GM23248 (cell line): ENCODE measurements at regions of chrX and their contacts with region 1.

Region 1: DNA sequence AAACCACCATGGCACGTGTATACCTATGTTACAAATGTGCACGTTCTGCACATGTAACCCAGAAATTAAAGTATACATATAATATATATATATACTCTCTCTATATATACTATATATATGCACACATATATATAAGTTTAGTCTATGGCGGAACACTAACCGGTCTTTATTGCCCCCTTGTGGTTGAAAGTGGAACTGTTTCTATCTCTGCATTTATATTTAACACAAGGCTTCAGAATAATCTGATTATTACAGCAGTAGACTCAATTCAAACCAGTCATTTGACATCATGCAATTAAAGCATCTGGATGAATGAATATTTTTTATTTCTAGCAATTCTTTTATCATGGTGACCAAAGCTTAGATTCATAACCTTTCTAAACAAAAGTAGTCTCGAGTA is 14.6 kb downstream of the RAB9B start:
- DNase-seq: peak; percentile 24
- H3K4me3 ChIP-seq: no peak overlapping the region
- H3K27ac ChIP-seq: no peak overlapping the region
- H3K4me1 ChIP-seq: peaks cover 5% of the 10 kb centered on the region
- H3K27me3 ChIP-seq: no peaks in the 10 kb centered on the region

Region 2: DNA sequence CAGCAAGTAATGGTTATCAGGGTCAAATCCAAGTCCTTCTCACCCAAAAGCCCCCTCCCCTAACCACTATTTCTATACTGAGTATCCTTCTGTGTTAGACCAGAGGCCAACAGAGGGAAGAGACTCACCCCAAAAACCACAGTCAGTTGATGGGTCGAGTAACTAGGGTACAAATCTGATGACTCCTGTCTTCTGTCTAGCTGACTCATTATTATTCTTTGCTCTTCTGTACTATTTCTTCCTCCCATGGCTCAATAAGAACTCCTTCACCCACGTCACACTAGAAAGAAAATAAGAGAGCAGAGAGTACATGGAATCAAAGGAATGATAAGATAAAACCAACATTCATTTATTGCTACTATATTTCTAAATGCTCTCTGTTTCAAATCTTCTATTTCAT is 300.3 kb before region 1 on chrX:
- in situ Hi-C with region 1: no loop called
- DNase-seq: peak; percentile 58
- H3K4me3 ChIP-seq: no peak overlapping the region
- H3K27ac ChIP-seq: peak overlapping the region; percentile 27; the same call in 1 of the 2 replicates
- H3K4me1 ChIP-seq: peaks cover 10% of the 10 kb centered on the region; the same call in 1 of the 2 replicates
- H3K27me3 ChIP-seq: no peaks in the 10 kb centered on the region

Region 3: DNA sequence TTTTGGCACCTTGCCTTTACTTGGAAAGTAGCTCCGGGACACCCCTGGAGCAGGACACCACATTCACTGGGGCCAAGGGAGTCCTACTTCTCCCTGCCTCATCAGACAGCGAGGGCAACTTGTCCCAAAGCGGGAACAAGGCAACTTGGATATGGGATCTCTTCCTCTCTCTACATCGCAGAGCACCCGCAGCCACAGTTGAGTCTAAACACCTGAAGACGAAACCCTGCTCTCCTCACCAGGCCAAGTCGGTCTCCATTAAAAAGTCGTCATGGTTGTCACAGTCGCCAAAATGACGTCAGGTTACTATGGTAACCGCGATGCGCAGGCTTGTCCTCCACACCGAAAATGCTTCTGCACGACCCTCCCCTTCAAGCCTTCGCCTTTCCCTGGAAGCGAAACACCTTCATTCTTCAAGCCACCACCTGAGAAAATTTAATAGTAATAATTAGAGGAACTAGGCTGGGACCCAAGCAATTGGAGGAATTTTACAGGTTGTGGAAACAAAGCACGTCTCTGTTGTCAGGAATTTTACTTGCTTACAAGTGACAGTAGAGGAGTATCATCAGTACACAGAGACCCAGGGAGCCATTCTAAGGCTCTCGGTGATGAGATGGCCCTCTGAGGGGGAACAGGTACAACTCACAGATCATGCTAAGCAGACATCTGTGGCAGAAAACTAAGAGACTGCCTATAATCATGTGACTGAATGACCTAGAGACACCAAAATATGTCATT is 262.6 kb before region 1 on chrX:
- in situ Hi-C with region 1: loop called (anchors 25 kb)
- DNase-seq: no peak
- H3K4me3 ChIP-seq: no peak overlapping the region
- H3K27ac ChIP-seq: no peak overlapping the region
- H3K4me1 ChIP-seq: peaks cover 8% of the 10 kb centered on the region; the same call in 1 of the 2 replicates
- H3K27me3 ChIP-seq: no peaks in the 10 kb centered on the region

Region 4: DNA sequence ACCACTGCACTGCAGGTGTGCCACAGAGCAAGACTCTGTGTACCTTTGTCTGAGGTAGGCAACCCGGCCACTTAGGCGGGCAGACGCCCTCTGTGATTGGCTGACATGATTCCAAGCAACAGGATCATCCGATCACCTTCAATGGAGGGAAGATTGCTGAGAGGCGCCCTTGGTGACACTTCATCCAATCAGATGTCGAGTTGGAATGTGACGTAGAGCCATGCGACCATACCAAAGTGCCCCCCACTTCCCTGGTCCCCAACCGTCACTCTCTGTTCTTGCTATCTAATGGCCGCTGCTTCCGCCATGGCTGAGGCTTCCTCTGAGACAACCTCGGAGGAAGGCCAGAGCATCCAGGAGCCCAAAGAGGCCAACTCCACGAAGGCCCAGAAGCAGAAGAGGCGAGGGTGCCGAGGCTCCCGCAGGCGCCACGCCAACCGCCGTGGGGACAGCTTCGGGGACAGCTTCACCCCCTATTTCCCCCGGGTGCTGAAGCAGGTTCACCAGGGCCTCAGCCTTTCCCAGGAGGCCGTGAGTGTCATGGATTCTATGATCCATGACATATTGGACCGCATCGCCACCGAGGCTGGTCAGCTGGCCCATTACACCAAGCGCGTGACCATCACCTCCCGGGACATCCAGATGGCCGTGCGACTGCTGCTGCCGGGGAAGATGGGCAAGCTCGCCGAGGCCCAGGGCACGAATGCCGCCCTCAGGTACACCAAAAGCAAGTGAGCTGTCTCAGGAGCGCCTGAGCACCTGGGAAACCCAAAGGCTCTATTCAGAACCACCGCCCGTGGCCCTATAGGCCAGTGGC is 222.4 kb after region 1 on chrX and contains the start of gene H2BW2:
- in situ Hi-C with region 1: no loop called
- DNase-seq: no peak
- H3K4me3 ChIP-seq: no peak within 1 kb of the TSS
- H3K27ac ChIP-seq: no peak within 1 kb of the TSS
- H3K4me1 ChIP-seq: no peaks in the 10 kb centered on the region
- H3K27me3 ChIP-seq: no peaks in the 10 kb centered on the region
- total RNA-seq, gene H2BW2: not detected in 2 replicates